MCF 10A (cell line): ENCODE measurements at regions of chr1 and their contacts with region 1.

Region 1: GRCh38 chr1:160098852-160099561 is 588 bp upstream of the IGSF8 start:
- DNase-seq: peak; percentile 96
- H3K4me3 Mint-ChIP-seq: peak overlapping the region; percentile 81
- H3K27ac Mint-ChIP-seq: no peak overlapping the region
- H3K4me1 Mint-ChIP-seq: peaks cover 36% of the 10 kb centered on the region
- H3K27me3 Mint-ChIP-seq: no peaks in the 10 kb centered on the region
- CTCF ChIP-seq: no peak

Region 2: DNA sequence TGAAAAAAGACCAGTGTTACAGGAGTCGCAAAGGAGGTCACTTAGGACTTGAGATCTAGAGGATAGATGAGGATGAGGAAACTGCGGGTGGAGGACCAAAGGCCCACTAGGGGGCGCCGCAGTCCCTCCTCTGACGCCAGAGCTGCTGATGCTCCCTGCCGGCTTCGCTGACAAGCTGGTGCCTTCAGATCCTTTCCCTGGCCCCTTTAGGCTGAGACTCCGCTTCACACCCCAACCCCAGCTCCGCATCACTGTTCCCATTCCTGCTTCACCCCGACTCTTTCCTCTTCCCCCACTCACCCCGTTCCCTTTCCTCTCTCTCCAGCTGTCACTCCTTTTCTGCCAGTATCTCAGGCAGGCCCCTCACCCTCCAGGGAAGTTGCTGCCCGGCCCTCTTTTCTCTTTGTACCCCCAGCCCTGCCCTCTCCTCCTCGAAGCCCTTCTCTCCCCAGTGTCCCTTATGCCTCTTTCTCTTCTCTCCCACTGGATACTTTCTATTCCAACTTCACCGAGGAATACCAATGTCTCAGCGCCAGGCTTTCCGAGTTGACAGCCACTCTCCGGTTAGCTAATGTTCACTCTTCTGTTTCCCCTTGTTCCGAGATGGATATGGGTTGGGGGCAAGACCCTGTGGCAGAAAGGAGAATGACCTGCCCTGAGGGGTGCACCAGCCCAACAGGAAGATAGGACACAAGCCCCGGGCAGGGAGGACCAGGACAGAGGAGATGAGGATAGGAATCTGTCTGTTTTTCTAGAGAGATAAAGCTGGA is 13.1 kb before region 1 on chr1:
- CTCF ChIA-PET with region 1: interaction called, 1,546 read pairs
- POLR2A ChIA-PET with region 1: interaction called, 23 read pairs
- intact Hi-C with region 1: no loop called
- DNase-seq: peak; percentile 82
- H3K4me3 Mint-ChIP-seq: no peak overlapping the region
- H3K27ac Mint-ChIP-seq: no peak overlapping the region
- H3K4me1 Mint-ChIP-seq: peaks cover 5% of the 10 kb centered on the region
- H3K27me3 Mint-ChIP-seq: peaks cover 24% of the 10 kb centered on the region
- CTCF ChIP-seq: peak; percentile 96

Region 3: DNA sequence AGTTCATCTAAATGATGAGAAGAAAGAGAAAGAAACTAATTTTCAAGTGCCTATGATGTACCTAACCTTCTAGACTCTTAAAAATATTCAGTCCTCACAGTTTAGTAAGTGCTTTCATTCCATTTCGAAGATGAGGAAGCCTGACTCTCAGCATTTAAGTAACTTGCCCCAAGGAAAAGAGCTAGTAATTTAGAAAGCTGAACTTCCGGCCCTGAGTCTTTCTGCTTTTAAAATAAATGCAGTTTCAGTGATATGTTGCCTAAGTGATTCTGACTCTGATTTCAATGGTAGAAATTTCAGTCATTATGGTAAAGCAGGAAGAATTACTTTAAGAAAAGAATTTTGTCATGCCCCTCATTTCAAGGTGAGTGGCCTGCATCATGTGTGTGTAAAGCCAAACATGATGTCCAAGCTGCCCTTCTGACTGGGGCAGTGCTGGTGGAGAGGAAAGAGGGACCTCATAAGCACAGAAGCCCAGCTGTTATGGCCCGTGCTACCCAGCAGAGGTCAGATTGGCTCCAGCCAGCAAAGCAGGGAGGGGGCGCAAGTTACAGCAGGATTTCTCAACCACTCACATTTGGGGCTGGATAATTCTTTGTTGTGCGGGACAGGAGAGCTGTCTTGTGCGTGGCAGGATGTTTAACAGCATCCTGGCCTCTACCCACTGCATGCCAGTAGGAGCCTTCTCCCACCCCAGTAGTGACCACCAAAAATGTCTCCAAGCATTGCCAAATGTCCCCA is 63.1 kb after region 1 on chr1:
- CTCF ChIA-PET with region 1: interaction called, 10 read pairs
- POLR2A ChIA-PET with region 1: interaction called, 3 read pairs
- intact Hi-C with region 1: loop called (anchors 1 kb)
- DNase-seq: peak; percentile 17
- H3K4me3 Mint-ChIP-seq: no peak overlapping the region
- H3K27ac Mint-ChIP-seq: no peak overlapping the region
- H3K4me1 Mint-ChIP-seq: no peaks in the 10 kb centered on the region
- H3K27me3 Mint-ChIP-seq: peaks cover 32% of the 10 kb centered on the region
- CTCF ChIP-seq: peak; percentile 29

Region 4: DNA sequence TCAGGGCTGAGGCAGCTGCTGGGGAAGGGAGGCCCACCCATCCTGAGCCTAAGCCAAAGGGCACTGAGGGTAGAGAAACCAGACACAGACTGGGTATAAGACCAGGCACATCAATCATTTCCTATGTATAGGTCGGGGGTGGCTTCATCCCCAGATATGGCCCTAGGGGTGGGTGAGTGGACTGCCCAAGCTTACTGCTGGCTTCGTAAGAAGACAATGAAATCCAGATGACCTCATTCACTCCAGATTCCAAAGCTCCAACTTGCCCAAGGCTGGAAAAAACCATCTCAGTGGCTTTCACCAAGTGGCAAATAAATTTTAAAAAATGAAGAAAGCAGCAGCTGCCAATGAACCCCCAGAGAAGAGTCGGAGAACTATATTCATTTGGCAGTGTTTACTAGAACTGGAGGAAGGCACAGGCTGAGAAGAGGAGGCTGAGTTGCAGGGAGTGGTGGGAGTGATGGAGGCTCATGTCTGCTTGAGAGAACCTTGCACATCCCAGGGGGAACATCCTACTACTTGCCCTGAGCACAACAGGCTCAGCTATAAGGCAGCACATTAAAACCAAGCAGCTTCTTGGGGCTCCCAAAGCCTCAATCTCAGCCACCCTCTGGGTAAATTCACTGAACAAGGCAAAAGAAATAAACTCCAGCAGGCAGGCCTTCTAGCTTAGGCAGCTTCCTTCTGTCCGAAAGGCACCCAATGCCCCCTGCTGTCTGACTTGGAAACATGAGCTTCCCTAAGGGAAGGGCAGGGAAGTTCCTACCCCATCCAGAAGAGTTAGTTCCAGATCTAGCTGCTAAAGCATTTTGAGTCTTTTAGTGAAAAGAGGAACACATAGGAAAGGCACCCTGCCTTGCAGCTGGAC is 120.3 kb after region 1 on chr1:
- CTCF ChIA-PET with region 1: interaction called, 243 read pairs
- POLR2A ChIA-PET with region 1: interaction called, 16 read pairs
- intact Hi-C with region 1: loop called (anchors 1 kb)
- DNase-seq: peak; percentile 61
- H3K4me3 Mint-ChIP-seq: no peak overlapping the region
- H3K27ac Mint-ChIP-seq: no peak overlapping the region
- H3K4me1 Mint-ChIP-seq: peaks cover 7% of the 10 kb centered on the region
- H3K27me3 Mint-ChIP-seq: no peaks in the 10 kb centered on the region
- CTCF ChIP-seq: peak; percentile 47

Region 5: GRCh38 chr1:160251687-160252526 is 152.9 kb after region 1 on chr1:
- CTCF ChIA-PET with region 1: interaction called, 187 read pairs
- POLR2A ChIA-PET with region 1: interaction called, 29 read pairs
- intact Hi-C with region 1: loop called (anchors 1 kb)
- DNase-seq: peak; percentile 87
- H3K4me3 Mint-ChIP-seq: no peak overlapping the region
- H3K27ac Mint-ChIP-seq: peak overlapping the region; percentile 75
- H3K4me1 Mint-ChIP-seq: peaks cover 25% of the 10 kb centered on the region
- H3K27me3 Mint-ChIP-seq: no peaks in the 10 kb centered on the region
- CTCF ChIP-seq: peak; percentile 85

Region 6: DNA sequence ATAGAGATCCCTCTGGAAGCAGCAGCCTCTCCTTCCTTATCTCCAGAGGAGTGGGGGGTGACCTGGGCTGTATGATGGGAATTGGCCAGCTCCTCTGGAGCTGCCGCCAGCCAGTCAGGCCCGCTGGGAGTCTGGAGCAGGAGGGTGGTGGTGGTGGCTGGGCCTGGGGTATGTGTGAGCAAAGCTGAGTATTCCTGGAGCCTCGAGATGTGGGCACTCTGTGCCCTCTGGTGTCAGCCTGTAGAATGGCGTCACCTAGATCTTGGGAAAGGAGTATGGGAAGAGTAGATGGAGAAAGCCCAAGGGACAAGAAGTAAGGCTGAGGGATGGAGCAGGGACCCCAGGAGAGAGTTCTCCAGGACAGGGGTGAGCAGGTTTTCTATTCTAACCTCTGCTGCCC is 317.4 kb after region 1 on chr1:
- CTCF ChIA-PET with region 1: interaction called, 11 read pairs
- POLR2A ChIA-PET with region 1: interaction called, 4 read pairs
- intact Hi-C with region 1: loop called (anchors 1 kb)
- DNase-seq: peak; percentile 77
- H3K4me3 Mint-ChIP-seq: no peak overlapping the region
- H3K27ac Mint-ChIP-seq: no peak overlapping the region
- H3K4me1 Mint-ChIP-seq: peaks cover 12% of the 10 kb centered on the region
- H3K27me3 Mint-ChIP-seq: peaks cover 11% of the 10 kb centered on the region
- CTCF ChIP-seq: peak; percentile 83